MCF 10A (cell line): ENCODE measurements at regions of chr6 and their contacts with region 1.

Region 1: DNA sequence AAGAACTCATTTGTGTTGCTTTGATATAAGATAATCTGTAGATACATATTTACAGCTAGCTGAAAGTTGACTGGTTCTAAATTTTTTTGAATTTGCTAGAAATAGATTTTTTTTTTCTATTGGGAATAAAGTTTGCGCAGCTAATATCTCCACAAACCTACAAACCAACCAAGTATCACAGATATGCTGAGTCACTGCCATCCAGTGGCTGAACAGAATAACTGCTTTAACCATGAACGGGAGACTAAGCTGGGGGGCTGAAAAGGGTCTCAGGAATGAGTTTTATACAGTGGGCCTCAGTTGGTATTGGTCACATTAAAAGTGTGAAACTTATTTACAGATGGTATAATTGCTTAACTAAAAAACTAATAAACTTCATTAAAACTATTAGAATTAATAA is 326.7 kb upstream of the CNR1 start:
- DNase-seq: peak; percentile 46
- H3K4me3 Mint-ChIP-seq: no peak overlapping the region
- H3K27ac Mint-ChIP-seq: no peak overlapping the region
- H3K4me1 Mint-ChIP-seq: peaks cover 23% of the 10 kb centered on the region
- H3K27me3 Mint-ChIP-seq: no peaks in the 10 kb centered on the region
- CTCF ChIP-seq: peak; percentile 64

Region 2: GRCh38 chr6:87944541-87944954 is 548.3 kb before region 1 on chr6:
- CTCF ChIA-PET with region 1: interaction called, 13 read pairs
- POLR2A ChIA-PET with region 1: no interaction called
- intact Hi-C with region 1: no loop called
- DNase-seq: peak; percentile 68
- H3K4me3 Mint-ChIP-seq: no peak overlapping the region
- H3K27ac Mint-ChIP-seq: peak overlapping the region; percentile 43
- H3K4me1 Mint-ChIP-seq: peaks cover 23% of the 10 kb centered on the region
- H3K27me3 Mint-ChIP-seq: peaks cover 11% of the 10 kb centered on the region
- CTCF ChIP-seq: peak; percentile 22